Adrenal gland (tissue), 19 donors: ENCODE measurements at regions of chr15 and their contacts with region 1.

Region 1: DNA sequence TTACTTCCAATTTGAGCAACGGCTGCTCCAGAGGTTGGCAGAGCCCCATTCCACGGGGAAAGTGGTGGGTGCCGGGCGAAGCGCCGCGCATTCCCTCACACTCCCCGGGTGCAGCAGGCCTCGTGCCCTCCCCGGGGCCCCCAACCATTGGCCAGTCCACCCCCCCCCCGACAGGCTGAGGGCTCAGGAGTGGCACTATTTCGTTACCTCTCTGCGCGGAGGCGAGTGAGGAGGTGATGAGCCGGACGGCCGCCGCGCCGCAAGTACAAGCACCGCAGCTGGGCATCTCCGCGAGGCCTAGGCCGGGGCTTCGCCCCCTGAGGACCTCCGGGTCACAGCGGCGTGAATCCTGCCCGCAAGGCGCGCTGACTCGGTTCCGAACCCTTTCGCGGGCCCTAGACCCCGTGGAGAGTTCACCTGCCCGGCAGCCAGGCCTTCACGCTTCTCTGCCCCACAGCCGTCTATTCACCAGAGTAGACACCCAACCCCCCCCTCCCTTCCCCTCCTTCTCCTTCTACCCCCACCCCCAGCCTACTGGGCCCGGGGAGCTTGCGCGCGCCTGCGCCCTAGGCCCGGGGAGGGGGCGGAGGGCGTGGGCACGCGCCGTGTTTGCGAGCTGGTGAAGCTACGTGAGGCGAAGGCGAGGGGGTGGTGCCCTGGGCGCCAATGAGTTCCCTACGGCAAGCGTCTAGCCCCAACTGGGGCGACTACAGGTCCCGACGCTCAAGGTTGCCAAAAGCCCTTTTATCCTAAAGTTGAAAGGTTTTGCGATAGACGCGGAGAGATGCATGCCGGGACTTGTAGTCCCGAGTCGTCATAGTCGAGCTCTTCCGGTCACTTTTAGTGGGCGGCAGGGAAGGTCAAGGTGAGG is at the start of gene CLPX:
- DNase-seq: peak; percentile 93 to 98 (median 96)
- H3K4me3 ChIP-seq: peak within 1 kb of the TSS; percentile 69 to 97 (median 90)
- H3K27ac ChIP-seq: peak within 1 kb of the TSS; percentile 88 to 94 (median 92)
- H3K4me1 ChIP-seq: peaks cover 22 to 26% of the 10 kb centered on the region in 2 donors
- H3K27me3 ChIP-seq: no peaks in the 10 kb centered on the region
- CTCF ChIP-seq: no peak
- POLR2A ChIP-seq: peak in 1 of 2 donors; percentile 89
- total RNA-seq, gene CLPX: 34.3 to 70.7 (median 50.1) TPM

Region 2: GRCh38 chr15:65233696-65234095 is 48.6 kb after region 1 on chr15:
- intact Hi-C with region 1: no loop called
- DNase-seq: no peak
- H3K4me3 ChIP-seq: no peak overlapping the region
- H3K27ac ChIP-seq: no peak overlapping the region
- H3K4me1 ChIP-seq: no peaks in the 10 kb centered on the region
- H3K27me3 ChIP-seq: no peaks in the 10 kb centered on the region
- CTCF ChIP-seq: no peak
- POLR2A ChIP-seq: no peak

Region 3: GRCh38 chr15:65275728-65276126 is 90.6 kb after region 1 on chr15:
- intact Hi-C with region 1: loop called in 1 of 2 experiments (anchors 5 kb)
- DNase-seq: peak; percentile 65 to 86 (median 79)
- H3K4me3 ChIP-seq: no peak overlapping the region
- H3K27ac ChIP-seq: peak overlapping the region; percentile 31 to 84 (median 49)
- H3K4me1 ChIP-seq: peaks cover 7 to 8% of the 10 kb centered on the region in 2 donors
- H3K27me3 ChIP-seq: no peaks in the 10 kb centered on the region
- CTCF ChIP-seq: no peak
- POLR2A ChIP-seq: peak in 1 of 2 donors; percentile 53

Region 4: DNA sequence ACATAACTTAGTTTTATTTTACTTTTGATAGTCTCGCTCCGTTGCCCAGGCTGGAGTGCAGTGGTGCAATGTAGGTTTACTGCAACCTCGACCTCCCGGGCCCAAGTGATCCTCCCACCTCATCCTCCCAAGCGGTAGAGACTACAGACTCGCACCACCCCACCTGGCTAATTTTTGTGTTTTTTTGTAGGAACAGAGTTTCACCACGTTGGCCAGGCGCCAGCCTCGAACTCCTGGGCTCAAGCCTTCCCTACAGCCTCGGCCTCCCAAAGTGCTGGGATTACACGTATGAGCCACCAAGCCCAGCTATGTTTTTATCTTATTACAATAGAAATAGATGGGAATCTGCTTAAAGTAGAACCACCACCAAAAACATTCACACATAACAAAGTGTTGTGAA is 113.6 kb after region 1 on chr15:
- intact Hi-C with region 1: loop called in 1 of 2 experiments (anchors 5 kb)
- DNase-seq: peak in 1 of 7 donors; percentile 21
- H3K4me3 ChIP-seq: no peak overlapping the region
- H3K27ac ChIP-seq: no peak overlapping the region
- H3K4me1 ChIP-seq: peaks cover 7 to 26% of the 10 kb centered on the region in 2 donors
- H3K27me3 ChIP-seq: no peaks in the 10 kb centered on the region
- CTCF ChIP-seq: no peak
- POLR2A ChIP-seq: no peak